PC-9 (cell line): ENCODE measurements at regions of chr16 and their contacts with region 1.

Region 1: GRCh38 chr16:2867987-2868789 is 10.2 kb upstream of the PRSS22 start:
- DNase-seq: peak; percentile 84 to 97
- H3K4me3 ChIP-seq: peak overlapping the region; percentile 79
- H3K27ac ChIP-seq: peak overlapping the region; percentile 94
- H3K4me1 ChIP-seq: peaks cover 11% of the 10 kb centered on the region; the same call in 1 of the 2 replicates
- H3K27me3 ChIP-seq: no peaks in the 10 kb centered on the region
- CTCF ChIP-seq: peak; percentile 92

Region 2: GRCh38 chr16:2656985-2657384 is 211.2 kb before region 1 on chr16:
- CTCF ChIA-PET with region 1: no interaction called
- POLR2A ChIA-PET with region 1: no interaction called
- intact Hi-C with region 1: no loop called
- DNase-seq: no peak
- H3K4me3 ChIP-seq: no peak overlapping the region
- H3K27ac ChIP-seq: no peak overlapping the region
- H3K4me1 ChIP-seq: no peaks in the 10 kb centered on the region
- H3K27me3 ChIP-seq: peaks cover 14% of the 10 kb centered on the region; the same call in 1 of the 2 replicates
- CTCF ChIP-seq: no peak

Region 3: GRCh38 chr16:2682209-2683021 is 185.8 kb before region 1 on chr16 and contains the start of gene KCTD5:
- CTCF ChIA-PET with region 1: no interaction called
- POLR2A ChIA-PET with region 1: no interaction called
- intact Hi-C with region 1: loop called (anchors 2 kb)
- DNase-seq: peak; percentile 95 to 100
- H3K4me3 ChIP-seq: peak within 1 kb of the TSS; percentile 81
- H3K27ac ChIP-seq: peak within 1 kb of the TSS; percentile 72
- H3K4me1 ChIP-seq: peaks cover 33% of the 10 kb centered on the region
- H3K27me3 ChIP-seq: no peaks in the 10 kb centered on the region
- CTCF ChIP-seq: no peak
- total RNA-seq, gene KCTD5: 60.4 and 66.5 TPM in 2 replicates

Region 4: GRCh38 chr16:2720719-2721633 is 147.2 kb before region 1 on chr16:
- CTCF ChIA-PET with region 1: no interaction called
- POLR2A ChIA-PET with region 1: no interaction called
- intact Hi-C with region 1: loop called (anchors 1 kb)
- DNase-seq: peak; percentile 71 to 94
- H3K4me3 ChIP-seq: peak overlapping the region; percentile 64
- H3K27ac ChIP-seq: peak overlapping the region; percentile 72
- H3K4me1 ChIP-seq: peaks cover 34% of the 10 kb centered on the region
- H3K27me3 ChIP-seq: no peaks in the 10 kb centered on the region
- CTCF ChIP-seq: peak; percentile 34; the same call in 1 of the 2 replicates

Region 5: GRCh38 chr16:2816751-2817339 is 51.3 kb before region 1 on chr16 and contains the start of gene PRSS21:
- CTCF ChIA-PET with region 1: no interaction called
- POLR2A ChIA-PET with region 1: no interaction called
- intact Hi-C with region 1: loop called (anchors 1 kb)
- DNase-seq: peak; percentile 38 to 75
- H3K4me3 ChIP-seq: peak within 1 kb of the TSS; percentile 81
- H3K27ac ChIP-seq: no peak within 1 kb of the TSS
- H3K4me1 ChIP-seq: peaks cover 28% of the 10 kb centered on the region
- H3K27me3 ChIP-seq: no peaks in the 10 kb centered on the region
- CTCF ChIP-seq: peak; percentile 73
- total RNA-seq, gene PRSS21: 61.2 and 77.4 TPM in 2 replicates

Region 6: DNA sequence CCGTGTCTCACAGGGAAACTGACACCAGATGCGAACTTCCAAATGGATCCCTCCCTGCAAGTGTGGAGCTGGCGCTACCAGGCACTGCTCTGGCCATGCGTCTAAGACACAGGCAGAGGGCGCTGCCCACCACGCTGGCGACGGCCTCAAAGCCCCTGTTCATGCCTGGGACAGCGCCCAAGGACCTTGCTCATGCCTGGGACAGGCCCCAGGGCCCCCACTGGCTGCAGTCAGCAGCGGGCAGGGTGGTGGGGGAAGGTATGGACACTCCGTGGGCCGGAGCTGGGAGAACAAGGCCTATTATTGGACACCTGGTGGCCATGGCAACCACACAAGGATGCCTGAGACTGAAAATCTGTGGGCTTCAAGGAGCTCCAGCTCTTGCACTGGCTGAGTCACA is 29.3 kb before region 1 on chr16:
- CTCF ChIA-PET with region 1: interaction called, 6 read pairs
- POLR2A ChIA-PET with region 1: no interaction called
- intact Hi-C with region 1: loop called (anchors 1 kb)
- DNase-seq: no peak
- H3K4me3 ChIP-seq: no peak overlapping the region
- H3K27ac ChIP-seq: no peak overlapping the region
- H3K4me1 ChIP-seq: peaks cover 32% of the 10 kb centered on the region
- H3K27me3 ChIP-seq: no peaks in the 10 kb centered on the region
- CTCF ChIP-seq: 0 out of 2 replicates have a peak, but pooled peaks have one; percentile 52

Region 7: GRCh38 chr16:3431779-3432219 is 563.6 kb after region 1 on chr16:
- CTCF ChIA-PET with region 1: no interaction called
- POLR2A ChIA-PET with region 1: no interaction called
- intact Hi-C with region 1: no loop called
- DNase-seq: no peak
- H3K4me3 ChIP-seq: no peak overlapping the region
- H3K27ac ChIP-seq: no peak overlapping the region
- H3K4me1 ChIP-seq: no peaks in the 10 kb centered on the region
- H3K27me3 ChIP-seq: peaks cover 70% of the 10 kb centered on the region
- CTCF ChIP-seq: no peak